Activated naive CD4-positive, alpha-beta T cell treated with anti-CD3 and anti-CD28 coated beads for 36 hours (primary cell): ENCODE measurements at regions of chr11 and their contacts with region 1.

Region 1: DNA sequence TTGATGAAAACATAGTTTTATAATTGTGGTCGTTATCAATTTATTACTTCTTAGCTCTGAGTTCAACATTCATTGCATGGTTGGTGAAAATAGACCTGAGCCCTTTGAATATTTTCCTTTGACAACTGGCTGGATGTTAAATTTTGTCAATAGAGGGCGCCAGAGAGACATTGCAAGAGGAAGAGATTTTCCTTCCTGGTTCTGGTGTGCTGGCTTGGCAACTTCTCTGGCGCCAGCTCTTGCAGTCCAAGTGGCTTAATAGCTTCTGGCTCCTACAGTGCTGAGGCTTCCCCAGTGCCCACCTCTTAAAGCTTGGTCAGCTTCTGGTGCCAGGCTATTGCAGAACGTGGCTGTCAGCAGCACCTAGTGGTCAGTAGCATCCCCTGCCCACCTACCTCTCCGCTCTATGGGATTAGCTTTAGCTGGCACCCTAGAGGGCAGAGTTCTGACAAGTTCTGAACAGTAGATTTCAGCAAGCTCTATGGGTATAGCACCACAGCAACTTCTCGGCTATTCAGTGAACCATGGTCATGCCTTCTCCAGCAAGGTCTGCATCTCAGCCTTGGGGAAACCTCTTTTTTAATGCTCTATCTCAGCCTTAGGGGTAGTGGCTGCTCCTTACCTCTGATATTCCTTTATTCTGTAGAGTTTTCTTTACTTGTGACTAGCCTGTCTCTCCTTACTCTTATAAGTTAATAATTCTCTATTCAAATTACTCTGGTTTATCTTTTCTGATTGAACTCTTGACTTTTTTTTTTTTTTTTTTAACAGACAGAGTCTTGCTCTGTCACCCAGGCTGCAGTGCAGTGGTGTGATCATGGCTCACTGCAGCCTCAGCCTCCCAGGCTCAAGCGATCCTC is 59.4 kb downstream of the ACER3 start:
- DNase-seq: peak; percentile 76
- H3K4me3 Mint-ChIP-seq: peak overlapping the region; percentile 52
- H3K27ac Mint-ChIP-seq: no peak overlapping the region
- H3K4me1 Mint-ChIP-seq: peaks cover 6% of the 10 kb centered on the region
- H3K27me3 Mint-ChIP-seq: no peaks in the 10 kb centered on the region

Region 2: GRCh38 chr11:76543006-76543703 is 377.0 kb before region 1 on chr11:
- CTCF ChIA-PET with region 1: no interaction called
- intact Hi-C with region 1: no loop called
- DNase-seq: no peak
- H3K4me3 Mint-ChIP-seq: no peak overlapping the region
- H3K27ac Mint-ChIP-seq: no peak overlapping the region
- H3K4me1 Mint-ChIP-seq: no peaks in the 10 kb centered on the region
- H3K27me3 Mint-ChIP-seq: no peaks in the 10 kb centered on the region

Region 3: GRCh38 chr11:76721755-76722677 is 198.1 kb before region 1 on chr11:
- CTCF ChIA-PET with region 1: interaction called, 22 read pairs
- intact Hi-C with region 1: no loop called
- DNase-seq: peak; percentile 86
- H3K4me3 Mint-ChIP-seq: peak overlapping the region; percentile 13
- H3K27ac Mint-ChIP-seq: no peak overlapping the region
- H3K4me1 Mint-ChIP-seq: peaks cover 5% of the 10 kb centered on the region
- H3K27me3 Mint-ChIP-seq: peaks cover 16% of the 10 kb centered on the region

Region 4: GRCh38 chr11:76799066-76799804 is 120.9 kb before region 1 on chr11:
- CTCF ChIA-PET with region 1: interaction called, 50 read pairs
- intact Hi-C with region 1: no loop called
- DNase-seq: peak; percentile 79
- H3K4me3 Mint-ChIP-seq: peak overlapping the region; percentile 18
- H3K27ac Mint-ChIP-seq: no peak overlapping the region
- H3K4me1 Mint-ChIP-seq: peaks cover 14% of the 10 kb centered on the region
- H3K27me3 Mint-ChIP-seq: no peaks in the 10 kb centered on the region

Region 5: DNA sequence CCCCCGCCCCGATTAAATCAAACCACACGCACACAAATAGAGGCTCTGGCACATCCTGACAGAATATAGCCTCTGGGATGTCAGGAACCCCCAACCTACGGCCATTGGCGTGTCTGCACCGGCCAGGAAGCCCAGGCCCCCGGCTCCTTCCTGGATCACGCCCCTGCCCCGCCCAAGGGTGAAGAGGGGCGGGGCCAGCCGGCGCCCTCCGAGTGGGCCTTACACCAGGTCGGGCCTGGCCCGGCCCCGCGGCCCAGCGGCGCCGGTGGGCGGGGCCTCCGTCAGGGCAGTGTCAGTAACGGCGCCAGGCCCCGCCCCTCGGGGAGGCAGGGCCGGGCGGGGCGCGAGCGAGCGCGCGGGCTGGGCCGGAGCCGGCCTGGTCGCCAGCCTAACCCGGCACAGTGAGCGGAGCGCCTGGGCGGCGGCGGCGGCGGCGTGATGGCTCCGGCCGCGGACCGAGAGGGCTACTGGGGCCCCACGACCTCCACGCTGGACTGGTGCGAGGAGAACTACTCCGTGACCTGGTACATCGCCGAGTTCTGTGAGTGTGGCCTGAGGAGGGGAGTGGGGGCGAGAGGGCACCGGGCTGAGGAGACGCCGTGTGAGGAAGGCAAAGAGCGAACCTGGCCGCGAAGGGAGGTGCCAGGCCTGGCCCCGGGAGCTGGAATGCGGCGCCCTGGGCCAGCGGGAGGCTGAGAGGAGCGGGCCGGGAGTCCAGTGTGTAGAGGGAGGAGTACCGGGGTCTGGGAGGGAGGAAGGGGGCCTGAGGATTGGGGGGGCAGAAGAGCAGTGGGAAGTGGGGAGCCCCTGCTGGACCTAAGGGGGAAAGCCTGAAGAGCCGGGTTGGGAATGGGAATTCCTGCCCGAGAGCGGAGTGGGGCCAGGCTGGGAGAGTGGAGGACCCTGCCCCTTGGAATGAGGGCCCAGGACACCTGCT is 59.3 kb before region 1 on chr11 and contains the start of gene ACER3:
- CTCF ChIA-PET with region 1: interaction called, 11 read pairs
- intact Hi-C with region 1: loop called (anchors 1 kb)
- DNase-seq: peak; percentile 85
- H3K4me3 Mint-ChIP-seq: peak within 1 kb of the TSS; percentile 87
- H3K27ac Mint-ChIP-seq: no peak within 1 kb of the TSS
- H3K4me1 Mint-ChIP-seq: peaks cover 14% of the 10 kb centered on the region
- H3K27me3 Mint-ChIP-seq: no peaks in the 10 kb centered on the region
- total RNA-seq, gene ACER3: 7.6 to 10.0 TPM

Region 6: GRCh38 chr11:76947800-76948199 is 27.7 kb after region 1 on chr11:
- CTCF ChIA-PET with region 1: interaction called, 13 read pairs
- intact Hi-C with region 1: no loop called
- DNase-seq: no peak
- H3K4me3 Mint-ChIP-seq: no peak overlapping the region
- H3K27ac Mint-ChIP-seq: no peak overlapping the region
- H3K4me1 Mint-ChIP-seq: no peaks in the 10 kb centered on the region
- H3K27me3 Mint-ChIP-seq: no peaks in the 10 kb centered on the region

Region 7: GRCh38 chr11:77091146-77091940 is 171.2 kb after region 1 on chr11:
- CTCF ChIA-PET with region 1: interaction called, 55 read pairs
- intact Hi-C with region 1: loop called (anchors 1 kb)
- DNase-seq: peak; percentile 89
- H3K4me3 Mint-ChIP-seq: no peak overlapping the region
- H3K27ac Mint-ChIP-seq: no peak overlapping the region
- H3K4me1 Mint-ChIP-seq: peaks cover 5% of the 10 kb centered on the region
- H3K27me3 Mint-ChIP-seq: no peaks in the 10 kb centered on the region

Region 8: GRCh38 chr11:77361184-77361583 is 441.1 kb after region 1 on chr11:
- CTCF ChIA-PET with region 1: no interaction called
- intact Hi-C with region 1: no loop called
- DNase-seq: no peak
- H3K4me3 Mint-ChIP-seq: no peak overlapping the region
- H3K27ac Mint-ChIP-seq: no peak overlapping the region
- H3K4me1 Mint-ChIP-seq: no peaks in the 10 kb centered on the region
- H3K27me3 Mint-ChIP-seq: no peaks in the 10 kb centered on the region